Ascending aorta (tissue), 2 donors: ENCODE measurements at regions of chr5 and their contacts with region 1.

Region 1: DNA sequence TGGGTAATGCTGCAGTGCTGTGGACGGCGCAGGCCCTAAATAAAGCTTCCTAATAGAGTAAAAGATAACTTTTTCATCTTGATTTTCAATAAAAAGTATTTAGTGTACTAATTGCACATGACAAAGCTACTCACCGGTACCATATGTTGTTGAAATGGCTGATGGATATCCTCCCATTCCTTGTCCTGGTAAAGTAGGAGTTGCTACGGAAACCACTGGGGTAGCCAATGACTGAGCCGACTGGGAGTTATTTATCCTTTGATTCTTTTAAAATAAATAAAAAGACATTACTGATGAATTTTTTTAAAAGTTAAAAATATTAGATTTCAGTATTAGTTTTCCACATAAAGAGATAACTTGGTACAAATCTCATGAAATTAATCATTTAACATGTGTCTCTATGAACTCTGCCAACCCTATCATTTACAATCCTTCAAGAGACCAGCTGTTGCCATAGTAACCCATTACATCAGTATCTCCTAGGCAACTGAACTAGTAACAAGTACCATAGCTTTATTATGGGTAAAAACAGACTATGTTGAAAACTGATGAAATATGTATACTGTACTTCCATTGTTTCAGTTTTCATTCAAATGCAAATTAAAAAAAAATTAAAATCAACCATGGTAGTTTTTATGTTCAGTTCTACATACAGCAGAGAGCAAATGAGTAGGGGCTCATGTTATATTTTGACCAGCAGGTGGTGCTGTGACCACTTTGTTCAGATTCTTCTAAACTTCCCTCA is 153.7 kb downstream of the MEF2C start:
- DNase-seq: peak in 1 of 2 donors; percentile 86
- H3K4me3 ChIP-seq: no peak overlapping the region
- H3K27ac ChIP-seq: peak overlapping the region in 1 of 2 donors; percentile 82
- H3K4me1 ChIP-seq: peaks cover 11 to 35% of the 10 kb centered on the region in 2 donors
- H3K27me3 ChIP-seq: no peaks in the 10 kb centered on the region
- CTCF ChIP-seq: peak; percentile 61 to 74 (median 70)

Region 2: GRCh38 chr5:88769165-88769564 is 39.9 kb after region 1 on chr5:
- intact Hi-C with region 1: loop called (anchors 2 kb)
- DNase-seq: peak in 1 of 2 donors; percentile 89
- H3K4me3 ChIP-seq: no peak overlapping the region
- H3K27ac ChIP-seq: peak overlapping the region in 1 of 2 donors; percentile 68
- H3K4me1 ChIP-seq: peaks cover 0 to 13% of the 10 kb centered on the region in 2 donors
- H3K27me3 ChIP-seq: no peaks in the 10 kb centered on the region
- CTCF ChIP-seq: no peak

Region 3: GRCh38 chr5:88883059-88883835 is 154.0 kb after region 1 on chr5 and contains the start of gene MEF2C:
- intact Hi-C with region 1: loop called (anchors 1 kb)
- DNase-seq: peak; percentile 43 to 88
- H3K4me3 ChIP-seq: peak within 1 kb of the TSS; percentile 75 to 83
- H3K27ac ChIP-seq: peak within 1 kb of the TSS; percentile 90 to 95
- H3K4me1 ChIP-seq: no peaks in the 10 kb centered on the region
- H3K27me3 ChIP-seq: no peaks in the 10 kb centered on the region
- CTCF ChIP-seq: no peak
- total RNA-seq, gene MEF2C: 138 TPM

Region 4: GRCh38 chr5:89213573-89213972 is 484.3 kb after region 1 on chr5:
- intact Hi-C with region 1: loop called (anchors 5 kb)
- DNase-seq: no peak
- H3K4me3 ChIP-seq: no peak overlapping the region
- H3K27ac ChIP-seq: no peak overlapping the region
- H3K4me1 ChIP-seq: no peaks in the 10 kb centered on the region
- H3K27me3 ChIP-seq: no peaks in the 10 kb centered on the region
- CTCF ChIP-seq: no peak

Region 5: GRCh38 chr5:89729623-89730301 is 1000.5 kb after region 1 on chr5:
- intact Hi-C with region 1: loop called (anchors 10 kb)
- DNase-seq: no peak
- H3K4me3 ChIP-seq: no peak overlapping the region
- H3K27ac ChIP-seq: no peak overlapping the region
- H3K4me1 ChIP-seq: peaks cover 0 to 10% of the 10 kb centered on the region in 2 donors
- H3K27me3 ChIP-seq: no peaks in the 10 kb centered on the region
- CTCF ChIP-seq: no peak

Region 6: DNA sequence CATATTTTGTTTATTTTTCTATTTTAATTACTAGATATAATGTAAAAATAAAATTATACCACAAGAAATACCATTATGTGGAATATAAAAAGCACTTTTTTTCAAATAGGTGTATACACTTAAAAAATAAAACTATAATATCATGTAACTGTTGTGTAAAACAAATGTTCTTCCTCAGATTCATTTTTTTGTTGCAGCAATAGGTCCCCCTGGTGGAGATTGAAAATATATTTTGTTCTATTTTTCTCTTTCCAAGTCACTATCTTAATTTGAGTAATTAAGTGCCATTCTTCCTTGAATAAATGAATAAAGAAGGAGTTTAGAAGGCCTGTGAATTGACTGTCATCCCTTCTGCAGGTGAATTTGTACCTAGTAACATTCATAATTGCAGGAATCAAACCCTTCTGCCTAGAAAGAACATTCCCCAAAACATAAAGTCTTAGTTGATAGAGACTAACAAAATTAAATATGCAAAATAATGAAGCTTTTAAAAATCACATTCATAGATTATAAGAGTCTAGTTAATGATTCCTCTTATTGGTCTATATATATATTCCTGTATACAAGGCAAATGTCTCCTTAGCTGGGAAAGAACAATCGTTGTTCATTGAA is 1656.9 kb after region 1 on chr5:
- intact Hi-C with region 1: loop called (anchors 5 kb)
- DNase-seq: no peak
- H3K4me3 ChIP-seq: no peak overlapping the region
- H3K27ac ChIP-seq: no peak overlapping the region
- H3K4me1 ChIP-seq: no peaks in the 10 kb centered on the region
- H3K27me3 ChIP-seq: no peaks in the 10 kb centered on the region
- CTCF ChIP-seq: peak; percentile 35 to 62 (median 41)